MCF 10A (cell line): ENCODE measurements at regions of chr1 and their contacts with region 1.

Region 1: GRCh38 chr1:39653546-39654031 is 14.1 kb upstream of the HEYL start:
- DNase-seq: peak; percentile 82
- H3K4me3 Mint-ChIP-seq: no peak overlapping the region
- H3K27ac Mint-ChIP-seq: peak overlapping the region; percentile 71
- H3K4me1 Mint-ChIP-seq: peaks cover 10% of the 10 kb centered on the region
- H3K27me3 Mint-ChIP-seq: no peaks in the 10 kb centered on the region
- CTCF ChIP-seq: peak; percentile 86

Region 2: DNA sequence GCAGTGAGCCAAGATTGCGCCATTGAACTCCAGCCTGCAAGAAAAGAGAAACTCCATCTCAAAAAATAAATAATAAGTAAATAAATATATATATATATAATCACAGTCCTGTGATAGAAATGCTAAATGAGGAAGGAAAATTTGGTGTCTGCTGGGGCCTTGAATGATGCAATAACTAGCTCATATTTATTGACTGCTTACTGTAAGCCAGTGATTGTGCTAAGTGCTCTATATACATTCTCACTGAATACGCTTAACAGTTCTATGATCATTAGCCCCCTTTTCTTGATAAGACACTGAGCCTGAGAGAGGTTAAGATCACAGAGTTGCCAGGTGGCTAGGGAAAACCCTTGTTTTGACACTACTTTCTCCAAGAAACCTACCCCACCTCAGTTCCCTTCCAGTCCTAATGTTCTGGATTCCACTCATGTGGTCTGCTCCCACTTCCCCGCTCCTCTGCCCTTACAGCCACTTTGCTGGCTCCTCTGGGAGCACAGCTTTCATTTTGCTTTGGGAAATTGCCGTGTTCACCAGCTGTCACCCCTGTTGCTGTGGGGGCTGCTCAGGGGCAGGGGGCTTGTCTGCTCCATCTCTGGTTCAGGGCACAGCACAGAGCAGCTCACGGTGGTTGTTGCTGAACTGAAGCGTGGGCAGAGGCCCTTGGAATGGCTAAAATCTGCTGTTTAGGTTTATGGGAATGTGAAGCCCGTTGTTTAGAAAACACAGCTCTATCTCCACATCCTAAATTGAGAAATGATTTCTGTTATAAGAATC is 164.6 kb before region 1 on chr1:
- CTCF ChIA-PET with region 1: no interaction called
- POLR2A ChIA-PET with region 1: no interaction called
- intact Hi-C with region 1: loop called (anchors 10 kb)
- DNase-seq: no peak
- H3K4me3 Mint-ChIP-seq: no peak overlapping the region
- H3K27ac Mint-ChIP-seq: no peak overlapping the region
- H3K4me1 Mint-ChIP-seq: no peaks in the 10 kb centered on the region
- H3K27me3 Mint-ChIP-seq: no peaks in the 10 kb centered on the region
- CTCF ChIP-seq: no peak

Region 3: GRCh38 chr1:39639305-39640130 is 14.1 kb before region 1 on chr1 and contains the start of gene HEYL:
- CTCF ChIA-PET with region 1: interaction called, 13 read pairs
- POLR2A ChIA-PET with region 1: interaction called, 4 read pairs
- intact Hi-C with region 1: no loop called
- DNase-seq: no peak
- H3K4me3 Mint-ChIP-seq: no peak within 1 kb of the TSS
- H3K27ac Mint-ChIP-seq: no peak within 1 kb of the TSS
- H3K4me1 Mint-ChIP-seq: no peaks in the 10 kb centered on the region
- H3K27me3 Mint-ChIP-seq: peaks cover 20% of the 10 kb centered on the region
- CTCF ChIP-seq: no peak
- total RNA-seq, gene HEYL: not detected in 2 replicates

Region 4: GRCh38 chr1:39666772-39667171 is 13.2 kb after region 1 on chr1:
- CTCF ChIA-PET with region 1: interaction called, 19 read pairs
- POLR2A ChIA-PET with region 1: interaction called, 5 read pairs
- intact Hi-C with region 1: no loop called
- DNase-seq: no peak
- H3K4me3 Mint-ChIP-seq: no peak overlapping the region
- H3K27ac Mint-ChIP-seq: no peak overlapping the region
- H3K4me1 Mint-ChIP-seq: no peaks in the 10 kb centered on the region
- H3K27me3 Mint-ChIP-seq: peaks cover 28% of the 10 kb centered on the region
- CTCF ChIP-seq: no peak

Region 5: GRCh38 chr1:39720094-39720999 is 66.8 kb after region 1 on chr1:
- CTCF ChIA-PET with region 1: interaction called, 5 read pairs
- POLR2A ChIA-PET with region 1: no interaction called
- intact Hi-C with region 1: loop called (anchors 5 kb)
- DNase-seq: peak; percentile 76
- H3K4me3 Mint-ChIP-seq: no peak overlapping the region
- H3K27ac Mint-ChIP-seq: no peak overlapping the region
- H3K4me1 Mint-ChIP-seq: no peaks in the 10 kb centered on the region
- H3K27me3 Mint-ChIP-seq: peaks cover 39% of the 10 kb centered on the region
- CTCF ChIP-seq: peak; percentile 50

Region 6: GRCh38 chr1:39901698-39902459 is 248.3 kb after region 1 on chr1 and contains the start of gene MYCL:
- CTCF ChIA-PET with region 1: no interaction called
- POLR2A ChIA-PET with region 1: no interaction called
- intact Hi-C with region 1: no loop called
- DNase-seq: peak; percentile 79
- H3K4me3 Mint-ChIP-seq: peak within 1 kb of the TSS; percentile 68
- H3K27ac Mint-ChIP-seq: no peak within 1 kb of the TSS
- H3K4me1 Mint-ChIP-seq: no peaks in the 10 kb centered on the region
- H3K27me3 Mint-ChIP-seq: peaks cover 14% of the 10 kb centered on the region
- CTCF ChIP-seq: peak; percentile 68
- total RNA-seq, gene MYCL: 0.63 and 1.1 TPM in 2 replicates